AG04449 (cell line): ENCODE measurements at regions of chr20 and their contacts with region 1.

Region 1: DNA sequence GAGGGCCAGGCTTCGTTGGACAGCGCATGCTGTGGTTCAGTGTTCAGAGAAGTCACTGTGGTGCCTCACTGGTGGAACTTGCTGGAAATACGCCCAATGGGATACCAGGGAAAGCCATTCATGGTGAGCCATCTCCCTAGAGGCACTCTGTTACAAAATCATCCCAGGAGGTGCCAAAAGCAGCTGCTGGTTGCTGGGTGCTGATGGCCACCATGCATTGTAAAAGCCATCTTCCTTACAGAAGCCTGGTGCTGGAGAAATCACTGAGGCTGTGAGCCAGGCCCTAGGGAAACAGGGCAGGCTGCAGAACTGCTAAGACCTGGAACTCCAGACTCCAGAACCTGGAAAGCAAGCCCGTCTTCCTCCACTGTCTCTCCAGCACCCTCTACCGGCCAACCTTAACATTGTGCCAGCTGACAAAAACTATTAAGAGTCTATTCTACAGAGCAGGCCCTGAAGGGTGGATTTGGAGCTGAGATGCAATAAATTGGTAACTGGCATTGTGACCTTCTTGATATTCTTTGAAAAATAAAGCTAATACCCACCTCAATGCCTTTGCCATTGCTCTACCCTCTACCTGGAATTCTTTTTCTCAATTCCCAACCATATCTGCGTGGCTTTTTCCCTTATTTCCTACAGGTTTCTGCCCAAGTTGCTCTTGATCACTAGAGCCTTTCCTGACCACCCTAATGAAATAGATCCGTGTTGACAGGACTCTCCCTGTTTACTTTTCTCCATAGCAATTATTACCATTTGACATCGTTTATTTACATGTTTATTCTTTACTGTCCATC is 18.5 kb downstream of the SNRPB start:
- DNase-seq: no peak
- H3K4me3 ChIP-seq: no peak overlapping the region
- CTCF ChIP-seq: peak; percentile 83

Region 2: GRCh38 chr20:2314759-2315439 is 137.2 kb before region 1 on chr20:
- CTCF ChIA-PET with region 1: interaction called, 18 read pairs
- POLR2A ChIA-PET with region 1: no interaction called
- DNase-seq: peak; percentile 65
- H3K4me3 ChIP-seq: no peak overlapping the region
- CTCF ChIP-seq: no peak

Region 3: DNA sequence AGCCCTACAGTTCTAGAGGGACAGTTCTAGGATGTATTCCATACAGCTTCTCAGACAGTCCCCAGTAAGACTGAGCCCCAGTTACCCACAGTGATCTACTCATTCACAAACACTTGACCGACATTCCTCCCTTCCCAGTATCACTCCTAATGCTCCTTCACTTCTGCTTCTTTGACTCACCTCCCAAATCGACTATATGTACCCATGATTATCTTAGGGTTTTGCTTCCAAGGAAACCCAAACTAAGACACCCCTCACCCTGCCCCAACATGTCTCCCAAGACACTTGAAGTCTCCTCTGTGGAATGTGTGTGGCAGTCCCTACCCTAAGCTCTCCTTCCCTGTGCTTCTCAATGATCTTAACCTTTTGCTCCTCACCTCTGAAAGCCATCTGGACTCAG is 95.0 kb before region 1 on chr20:
- CTCF ChIA-PET with region 1: interaction called, 10 read pairs
- POLR2A ChIA-PET with region 1: no interaction called
- DNase-seq: no peak
- H3K4me3 ChIP-seq: no peak overlapping the region
- CTCF ChIP-seq: no peak

Region 4: GRCh38 chr20:2387180-2387577 is 65.0 kb before region 1 on chr20:
- CTCF ChIA-PET with region 1: interaction called, 20 read pairs
- POLR2A ChIA-PET with region 1: no interaction called
- DNase-seq: no peak
- H3K4me3 ChIP-seq: no peak overlapping the region
- CTCF ChIP-seq: peak; percentile 41

Region 5: DNA sequence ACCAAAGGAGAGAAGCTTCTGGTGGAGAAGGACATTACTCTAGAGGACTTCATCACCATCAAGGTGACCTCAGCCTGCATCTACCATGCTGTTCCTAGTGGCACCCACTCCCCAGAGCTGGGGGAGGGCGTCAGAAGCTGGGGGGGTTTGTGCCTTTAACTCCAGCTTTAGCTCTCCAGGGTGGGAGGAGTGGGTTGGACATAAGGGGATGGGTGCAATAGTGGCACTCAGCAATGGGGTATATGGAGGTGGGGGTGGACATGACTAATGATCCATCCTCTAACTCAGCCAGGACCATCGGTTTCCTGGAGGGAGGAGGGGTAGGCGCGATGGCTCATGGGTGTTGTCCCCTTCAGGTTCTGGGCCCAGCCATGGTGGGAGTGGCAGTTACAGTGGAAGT is 21.6 kb before region 1 on chr20:
- CTCF ChIA-PET with region 1: interaction called, 37 read pairs
- POLR2A ChIA-PET with region 1: no interaction called
- DNase-seq: no peak
- H3K4me3 ChIP-seq: no peak overlapping the region
- CTCF ChIP-seq: no peak

Region 6: DNA sequence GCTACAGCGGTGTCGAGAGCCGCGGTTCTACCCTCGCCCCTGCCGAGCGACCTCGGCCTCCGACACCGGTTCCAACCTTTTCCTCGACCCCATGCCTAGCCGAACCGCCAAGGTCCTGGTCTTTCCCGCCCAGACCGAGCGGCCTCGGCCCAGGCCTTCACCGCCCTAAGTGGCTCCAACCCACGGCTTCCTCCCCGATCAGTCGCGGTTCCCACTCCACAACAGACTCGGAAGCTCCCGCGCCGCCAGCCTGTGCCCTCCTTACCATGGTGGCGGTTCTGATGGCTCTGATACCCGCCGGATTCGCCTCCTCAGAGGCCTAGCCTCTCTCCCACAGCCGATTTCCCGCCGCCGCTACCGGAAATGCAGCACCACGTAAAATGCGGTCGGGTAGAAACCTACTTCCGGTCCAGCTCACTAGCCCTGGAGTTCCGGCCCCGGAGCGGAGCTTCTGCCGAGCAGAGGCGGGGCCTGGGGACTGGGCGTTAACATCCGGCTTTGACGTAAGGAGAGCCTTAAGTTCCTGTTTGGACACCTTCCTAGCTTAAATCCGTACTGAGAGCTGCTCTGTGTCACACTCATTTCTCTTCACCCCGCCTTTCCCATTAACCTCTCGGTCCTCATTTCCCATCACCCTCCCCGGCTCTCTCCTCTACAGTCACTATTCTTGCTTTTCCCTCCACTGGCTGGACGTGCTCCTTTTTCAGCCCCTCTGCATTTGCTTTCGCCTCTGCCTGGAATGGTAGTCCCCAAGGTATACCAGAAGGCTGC is 18.5 kb after region 1 on chr20 and contains the start of gene SNRPB:
- CTCF ChIA-PET with region 1: interaction called, 59 read pairs
- POLR2A ChIA-PET with region 1: no interaction called
- DNase-seq: peak; percentile 97
- H3K4me3 ChIP-seq: peak within 1 kb of the TSS; percentile 97
- CTCF ChIP-seq: no peak